Thyroid gland (tissue), 4 donors: ENCODE measurements at regions of chr6 and their contacts with region 1.

Region 1: GRCh38 chr6:100116411-100117194 is 122.6 kb upstream of the MCHR2 start:
- DNase-seq: peak; percentile 35 to 37
- H3K4me3 ChIP-seq: no peak overlapping the region
- H3K27ac ChIP-seq: no peak overlapping the region
- H3K4me1 ChIP-seq: no peaks in the 10 kb centered on the region
- H3K27me3 ChIP-seq: no peaks in the 10 kb centered on the region
- CTCF ChIP-seq: peak in 5 of 6 experiments; percentile 23 to 65 (median 59)
- POLR2A ChIP-seq: no peak

Region 2: GRCh38 chr6:100479179-100480035 is 362.8 kb after region 1 on chr6:
- intact Hi-C with region 1: loop called (anchors 5 kb)
- DNase-seq: no peak
- H3K4me3 ChIP-seq: no peak overlapping the region
- H3K27ac ChIP-seq: no peak overlapping the region
- H3K4me1 ChIP-seq: peaks cover 0 to 11% of the 10 kb centered on the region in 2 donors
- H3K27me3 ChIP-seq: no peaks in the 10 kb centered on the region
- CTCF ChIP-seq: peak in 5 of 6 experiments; percentile 37 to 86 (median 69)
- POLR2A ChIP-seq: no peak

Region 3: DNA sequence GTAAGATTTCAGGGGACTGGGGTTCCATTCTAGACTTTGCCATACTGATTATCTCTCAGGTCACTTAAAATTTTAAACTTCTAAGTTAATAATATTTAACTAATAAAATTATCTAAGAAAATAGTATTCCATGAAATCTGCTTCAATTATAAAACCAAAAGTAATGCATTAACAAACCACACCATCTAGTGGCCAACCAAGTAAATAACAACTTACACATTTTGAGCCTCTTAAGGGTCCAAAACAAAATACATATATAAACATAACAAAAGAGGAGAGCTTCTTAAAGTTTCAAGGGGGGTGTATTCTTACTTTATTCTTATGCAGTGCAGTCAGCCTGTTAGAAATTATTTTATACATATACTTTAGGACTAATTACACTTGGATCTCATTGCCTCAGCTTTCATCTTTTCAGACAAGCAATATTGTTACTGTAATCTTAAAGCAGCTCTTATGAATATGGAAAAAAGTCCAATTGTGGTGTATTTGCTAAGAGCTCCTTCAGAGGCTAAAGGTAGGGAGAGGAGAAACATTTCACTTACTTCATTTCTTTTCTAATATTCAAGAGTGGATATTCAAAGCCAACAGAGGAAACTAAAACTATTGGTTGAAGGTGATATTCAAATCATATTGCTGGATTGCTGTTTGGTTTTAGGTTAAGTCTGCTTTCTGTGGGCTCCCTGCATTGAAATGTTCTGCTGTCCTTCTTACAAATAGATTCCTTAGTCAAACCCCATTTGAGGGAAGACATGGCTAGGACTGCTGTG is 547.9 kb after region 1 on chr6:
- intact Hi-C with region 1: loop called (anchors 10 kb)
- DNase-seq: no peak
- H3K4me3 ChIP-seq: no peak overlapping the region
- H3K27ac ChIP-seq: no peak overlapping the region
- H3K4me1 ChIP-seq: no peaks in the 10 kb centered on the region
- H3K27me3 ChIP-seq: no peaks in the 10 kb centered on the region
- CTCF ChIP-seq: peak; percentile 10 to 69 (median 56)
- POLR2A ChIP-seq: no peak